PC-9 (cell line): ENCODE measurements at regions of chr12 and their contacts with region 1.

Region 1: GRCh38 chr12:113109384-113109783 is 26.2 kb downstream of the RASAL1 start:
- DNase-seq: no peak
- H3K4me3 ChIP-seq: no peak overlapping the region
- H3K27ac ChIP-seq: no peak overlapping the region
- H3K4me1 ChIP-seq: no peaks in the 10 kb centered on the region
- H3K27me3 ChIP-seq: no peaks in the 10 kb centered on the region
- CTCF ChIP-seq: no peak

Region 2: DNA sequence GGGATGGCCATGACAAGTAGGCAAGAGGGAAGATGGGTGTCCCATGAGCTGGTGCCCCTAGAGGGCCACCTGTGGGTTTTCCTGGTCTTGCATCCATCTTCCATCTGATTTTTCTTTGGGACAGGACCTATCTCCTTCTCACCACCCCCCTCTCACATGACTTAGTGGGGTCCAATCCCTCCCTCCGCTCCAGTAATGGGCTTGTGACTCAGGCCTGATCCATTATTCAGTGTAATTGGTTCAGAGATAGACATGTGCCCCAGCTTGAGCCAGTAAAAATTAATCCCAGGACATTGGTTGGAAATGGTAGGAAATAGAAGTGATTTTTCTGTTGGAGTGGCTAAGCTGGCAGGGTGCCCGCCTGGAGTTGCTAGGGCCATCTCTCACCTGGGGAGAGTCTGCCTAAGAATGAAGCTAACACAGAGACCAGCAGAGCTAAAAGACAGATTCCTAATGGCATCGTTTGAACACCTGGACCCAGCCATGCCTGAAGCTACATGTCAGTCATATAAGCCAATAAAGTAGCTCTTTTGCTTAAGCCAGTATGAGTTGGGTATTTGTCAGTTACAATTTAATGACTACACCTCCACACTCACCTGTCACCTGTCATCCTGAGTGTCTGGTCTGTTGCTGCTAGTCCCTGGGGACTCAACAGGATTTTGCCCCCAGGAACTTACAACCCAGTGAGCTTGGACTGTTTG is 11.4 kb after region 1 on chr12:
- CTCF ChIA-PET with region 1: interaction called, 10 read pairs
- POLR2A ChIA-PET with region 1: no interaction called
- intact Hi-C with region 1: no loop called
- DNase-seq: no peak
- H3K4me3 ChIP-seq: no peak overlapping the region
- H3K27ac ChIP-seq: no peak overlapping the region
- H3K4me1 ChIP-seq: no peaks in the 10 kb centered on the region
- H3K27me3 ChIP-seq: no peaks in the 10 kb centered on the region
- CTCF ChIP-seq: no peak